PC-9 (cell line): ENCODE measurements at regions of chr6 and their contacts with region 1.

Region 1: GRCh38 chr6:47111685-47112084 is 69.6 kb upstream of the ADGRF1 start:
- DNase-seq: peak; percentile 71 to 96
- H3K4me3 ChIP-seq: no peak overlapping the region
- H3K27ac ChIP-seq: peak overlapping the region; percentile 98
- H3K4me1 ChIP-seq: peaks cover 95% of the 10 kb centered on the region
- H3K27me3 ChIP-seq: no peaks in the 10 kb centered on the region
- CTCF ChIP-seq: no peak

Region 2: GRCh38 chr6:47256361-47256760 is 144.7 kb after region 1 on chr6:
- CTCF ChIA-PET with region 1: no interaction called
- POLR2A ChIA-PET with region 1: interaction called, 15 read pairs
- intact Hi-C with region 1: no loop called
- DNase-seq: no peak
- H3K4me3 ChIP-seq: no peak overlapping the region
- H3K27ac ChIP-seq: peak overlapping the region; percentile 42
- H3K4me1 ChIP-seq: peaks cover 23% of the 10 kb centered on the region
- H3K27me3 ChIP-seq: no peaks in the 10 kb centered on the region
- CTCF ChIP-seq: no peak